Transverse colon (tissue), 4 donors: ENCODE measurements at regions of chr9 and their contacts with region 1.

Region 1: DNA sequence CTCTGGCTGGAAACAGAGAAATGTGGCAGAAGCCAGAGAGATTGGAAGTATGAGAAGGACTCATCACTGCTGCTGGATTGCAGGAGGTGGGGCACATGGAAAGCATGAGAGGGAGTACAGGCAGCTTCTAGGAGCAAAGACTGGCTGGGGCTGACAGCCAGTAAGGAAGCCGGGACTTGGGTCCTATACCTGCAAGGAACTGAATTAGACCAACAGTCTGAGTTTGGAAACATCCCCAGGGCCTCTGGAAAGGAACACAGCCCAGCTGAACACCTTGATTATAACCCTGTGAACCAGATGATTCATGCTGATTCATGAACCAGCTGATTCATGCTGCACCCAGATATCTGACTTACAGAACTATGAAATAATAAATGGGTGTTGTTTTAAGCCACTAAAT is 93.4 kb downstream of the OSTF1 start:
- DNase-seq: no peak
- H3K4me3 ChIP-seq: no peak overlapping the region
- H3K27ac ChIP-seq: no peak overlapping the region
- H3K4me1 ChIP-seq: peaks cover 0 to 2% (median 0%) of the 10 kb centered on the region in 4 donors
- H3K27me3 ChIP-seq: no peaks in the 10 kb centered on the region
- CTCF ChIP-seq: no peak
- EP300 ChIP-seq: no peak
- POLR2A ChIP-seq: no peak

Region 2: DNA sequence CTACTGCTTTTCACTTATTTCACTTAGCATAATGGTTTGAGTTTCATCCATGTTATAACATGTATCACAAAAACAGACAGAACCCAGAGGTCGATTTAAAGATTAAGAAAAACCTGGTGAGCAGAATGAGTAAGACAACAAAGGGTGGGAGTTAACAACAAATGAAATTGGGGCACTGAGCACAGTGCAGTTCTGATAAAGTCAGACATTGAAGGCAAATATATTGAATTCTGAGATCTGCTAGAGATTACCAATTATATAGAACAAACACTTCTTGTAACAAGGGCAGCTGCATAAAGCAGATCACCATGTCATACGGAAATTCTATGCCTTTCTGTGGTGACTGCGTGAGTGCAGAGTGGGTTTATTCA is 1201.9 kb before region 1 on chr9:
- in situ Hi-C with region 1: no loop called
- intact Hi-C with region 1: no loop called
- DNase-seq: no peak
- H3K4me3 ChIP-seq: no peak overlapping the region
- H3K27ac ChIP-seq: no peak overlapping the region
- H3K4me1 ChIP-seq: no peaks in the 10 kb centered on the region
- H3K27me3 ChIP-seq: no peaks in the 10 kb centered on the region
- CTCF ChIP-seq: no peak
- EP300 ChIP-seq: no peak
- POLR2A ChIP-seq: no peak

Region 3: GRCh38 chr9:75106857-75107256 is 74.9 kb before region 1 on chr9:
- in situ Hi-C with region 1: no loop called
- intact Hi-C with region 1: no loop called
- DNase-seq: peak; percentile 13
- H3K4me3 ChIP-seq: no peak overlapping the region
- H3K27ac ChIP-seq: peak overlapping the region in 3 of 4 donors; percentile 19 to 35 (median 22)
- H3K4me1 ChIP-seq: peaks cover 0 to 39% (median 3%) of the 10 kb centered on the region in 4 donors
- H3K27me3 ChIP-seq: no peaks in the 10 kb centered on the region
- CTCF ChIP-seq: no peak
- EP300 ChIP-seq: no peak
- POLR2A ChIP-seq: no peak

Region 4: DNA sequence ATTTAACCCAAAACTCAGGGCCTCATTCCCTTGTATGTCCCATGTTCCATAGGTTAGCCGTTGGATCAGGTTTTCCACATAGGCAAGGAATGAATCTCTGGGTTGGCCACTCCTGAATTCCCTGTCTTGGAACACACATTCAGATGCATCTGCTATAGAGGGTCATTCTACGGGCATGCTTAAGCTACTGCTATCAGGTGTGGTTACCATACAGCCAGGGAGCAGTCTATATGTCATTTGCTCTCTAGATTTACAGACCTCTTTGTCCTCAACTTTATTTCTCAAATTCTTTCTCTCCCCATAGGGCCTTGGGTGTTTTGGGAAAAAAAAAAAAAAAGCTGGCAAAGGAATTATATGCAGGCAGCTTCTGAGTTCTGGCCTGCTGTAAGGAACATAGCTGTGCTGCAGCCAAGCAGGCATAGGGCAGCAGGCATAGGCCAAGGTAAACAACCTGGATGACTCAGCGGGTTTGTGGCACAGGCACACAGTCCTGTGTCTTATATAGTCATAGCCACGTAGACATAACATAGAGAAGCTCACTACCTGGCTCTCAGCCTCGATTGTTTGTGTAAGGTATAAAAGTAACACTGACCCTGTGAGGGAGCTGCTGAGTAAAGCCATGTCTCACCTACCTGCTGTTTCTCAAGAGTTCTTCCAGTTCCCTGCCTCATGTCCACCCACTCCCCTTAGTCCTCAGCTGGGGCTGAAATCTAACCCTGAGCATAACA is 48.0 kb after region 1 on chr9:
- in situ Hi-C with region 1: loop called in 1 of 4 experiments (anchors 5 kb)
- intact Hi-C with region 1: no loop called
- DNase-seq: peak; percentile 77
- H3K4me3 ChIP-seq: no peak overlapping the region
- H3K27ac ChIP-seq: peak overlapping the region; percentile 66 to 85 (median 74)
- H3K4me1 ChIP-seq: peaks cover 9 to 45% (median 26%) of the 10 kb centered on the region in 4 donors
- H3K27me3 ChIP-seq: no peaks in the 10 kb centered on the region
- CTCF ChIP-seq: no peak
- EP300 ChIP-seq: no peak
- POLR2A ChIP-seq: no peak

Region 5: GRCh38 chr9:75683591-75683990 is 501.8 kb after region 1 on chr9:
- in situ Hi-C with region 1: no loop called
- intact Hi-C with region 1: no loop called
- DNase-seq: no peak
- H3K4me3 ChIP-seq: no peak overlapping the region
- H3K27ac ChIP-seq: no peak overlapping the region
- H3K4me1 ChIP-seq: no peaks in the 10 kb centered on the region
- H3K27me3 ChIP-seq: no peaks in the 10 kb centered on the region
- CTCF ChIP-seq: no peak
- EP300 ChIP-seq: no peak
- POLR2A ChIP-seq: no peak